Activated CD4-positive, alpha-beta memory T cell treated with anti-CD3 and anti-CD28 coated beads for 36 hours (primary cell): ENCODE measurements at regions of chr15 and their contacts with region 1.

Region 1: GRCh38 chr15:99704444-99704838 is 28.8 kb downstream of the LYSMD4 start:
- DNase-seq: no peak
- H3K4me3 Mint-ChIP-seq: no peak overlapping the region
- H3K27ac Mint-ChIP-seq: no peak overlapping the region
- H3K4me1 Mint-ChIP-seq: peaks cover 40% of the 10 kb centered on the region
- H3K27me3 Mint-ChIP-seq: no peaks in the 10 kb centered on the region

Region 2: DNA sequence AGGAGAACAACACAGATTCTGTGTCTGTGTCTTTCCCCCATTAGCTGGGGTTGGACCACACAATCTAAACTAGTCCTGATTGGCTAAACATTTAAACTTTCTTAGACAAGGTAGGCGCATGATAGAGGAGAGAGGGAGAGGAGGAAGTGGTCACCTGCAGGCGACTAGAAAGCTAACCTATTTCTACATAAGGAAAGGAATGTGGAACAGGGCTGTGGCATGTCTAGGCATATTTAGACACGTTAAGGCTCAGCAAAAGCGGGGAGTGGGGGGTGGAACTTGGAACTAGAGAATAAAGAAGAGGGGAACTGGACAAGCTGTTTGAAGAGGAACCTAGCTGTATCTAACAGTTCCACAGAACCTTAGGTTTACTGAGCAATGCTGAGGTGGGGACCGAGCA is 440.3 kb before region 1 on chr15:
- CTCF ChIA-PET with region 1: interaction called, 25 read pairs
- POLR2A ChIA-PET with region 1: no interaction called
- intact Hi-C with region 1: no loop called
- DNase-seq: no peak
- H3K4me3 Mint-ChIP-seq: no peak overlapping the region
- H3K27ac Mint-ChIP-seq: no peak overlapping the region
- H3K4me1 Mint-ChIP-seq: no peaks in the 10 kb centered on the region
- H3K27me3 Mint-ChIP-seq: no peaks in the 10 kb centered on the region

Region 3: DNA sequence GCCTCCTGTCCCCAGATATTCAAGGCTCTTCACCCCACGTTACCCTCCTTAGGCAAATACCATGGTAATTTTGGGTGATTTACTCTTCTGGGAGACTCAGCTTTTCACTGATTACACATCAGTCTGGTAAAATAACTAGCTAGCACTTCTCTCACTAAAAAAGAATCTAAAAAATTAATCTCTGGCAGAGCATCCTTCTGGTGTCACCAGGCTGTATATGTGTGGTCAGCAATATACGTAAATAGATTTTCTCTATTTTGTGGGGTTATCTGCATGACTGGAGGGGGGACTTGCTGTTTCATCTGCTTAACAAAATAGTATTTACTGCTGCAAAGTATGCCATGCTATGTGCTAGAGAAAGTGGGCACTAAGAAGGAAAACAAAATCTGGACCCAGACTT is 408.1 kb before region 1 on chr15:
- CTCF ChIA-PET with region 1: interaction called, 10 read pairs
- POLR2A ChIA-PET with region 1: no interaction called
- intact Hi-C with region 1: no loop called
- DNase-seq: no peak
- H3K4me3 Mint-ChIP-seq: no peak overlapping the region
- H3K27ac Mint-ChIP-seq: no peak overlapping the region
- H3K4me1 Mint-ChIP-seq: no peaks in the 10 kb centered on the region
- H3K27me3 Mint-ChIP-seq: no peaks in the 10 kb centered on the region

Region 4: DNA sequence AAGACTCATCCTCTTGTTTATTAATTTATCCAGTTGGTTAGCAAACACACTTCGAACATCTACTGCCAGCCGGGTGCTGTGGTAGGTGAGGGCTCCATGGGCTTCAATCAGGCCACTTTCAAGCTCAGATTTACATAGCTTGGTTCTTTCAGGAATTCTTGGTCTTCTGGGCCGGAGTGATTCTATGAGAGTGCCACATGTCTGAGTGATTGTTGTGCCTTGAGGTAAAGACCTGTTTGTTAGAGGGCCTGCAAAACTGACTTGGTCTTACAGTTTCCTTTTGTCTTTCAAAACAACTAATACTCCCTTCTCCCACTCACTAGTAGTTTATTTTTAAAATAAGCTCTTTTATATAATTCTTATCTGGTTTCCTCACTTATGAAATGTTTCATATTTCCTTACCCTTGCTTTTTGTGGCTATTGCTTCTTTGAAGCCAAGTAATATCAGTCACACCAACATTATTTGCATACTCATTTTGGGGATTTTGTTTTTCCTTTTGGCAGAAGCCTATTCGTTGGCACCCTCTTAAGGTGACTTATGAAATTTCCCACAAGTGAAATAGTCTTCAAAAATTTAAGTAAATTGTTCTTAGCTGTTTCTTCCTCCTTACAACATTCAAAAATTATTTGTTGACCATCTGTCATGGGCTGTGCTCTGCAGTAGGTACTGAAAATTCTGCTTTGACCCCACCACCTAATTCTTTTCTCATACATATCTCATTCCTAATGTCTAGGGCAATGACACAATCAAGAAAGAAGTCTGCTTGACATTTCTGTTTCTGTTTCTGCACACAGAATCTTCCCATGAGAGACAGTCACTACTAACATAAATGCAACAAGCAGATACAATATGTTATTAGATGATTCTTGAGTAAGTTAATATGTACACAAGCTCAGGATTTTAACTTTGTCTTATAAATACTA is 333.0 kb before region 1 on chr15:
- CTCF ChIA-PET with region 1: interaction called, 22 read pairs
- POLR2A ChIA-PET with region 1: no interaction called
- intact Hi-C with region 1: loop called (anchors 2 kb)
- DNase-seq: no peak
- H3K4me3 Mint-ChIP-seq: no peak overlapping the region
- H3K27ac Mint-ChIP-seq: peak overlapping the region; percentile 55
- H3K4me1 Mint-ChIP-seq: peaks cover 12% of the 10 kb centered on the region
- H3K27me3 Mint-ChIP-seq: no peaks in the 10 kb centered on the region

Region 5: DNA sequence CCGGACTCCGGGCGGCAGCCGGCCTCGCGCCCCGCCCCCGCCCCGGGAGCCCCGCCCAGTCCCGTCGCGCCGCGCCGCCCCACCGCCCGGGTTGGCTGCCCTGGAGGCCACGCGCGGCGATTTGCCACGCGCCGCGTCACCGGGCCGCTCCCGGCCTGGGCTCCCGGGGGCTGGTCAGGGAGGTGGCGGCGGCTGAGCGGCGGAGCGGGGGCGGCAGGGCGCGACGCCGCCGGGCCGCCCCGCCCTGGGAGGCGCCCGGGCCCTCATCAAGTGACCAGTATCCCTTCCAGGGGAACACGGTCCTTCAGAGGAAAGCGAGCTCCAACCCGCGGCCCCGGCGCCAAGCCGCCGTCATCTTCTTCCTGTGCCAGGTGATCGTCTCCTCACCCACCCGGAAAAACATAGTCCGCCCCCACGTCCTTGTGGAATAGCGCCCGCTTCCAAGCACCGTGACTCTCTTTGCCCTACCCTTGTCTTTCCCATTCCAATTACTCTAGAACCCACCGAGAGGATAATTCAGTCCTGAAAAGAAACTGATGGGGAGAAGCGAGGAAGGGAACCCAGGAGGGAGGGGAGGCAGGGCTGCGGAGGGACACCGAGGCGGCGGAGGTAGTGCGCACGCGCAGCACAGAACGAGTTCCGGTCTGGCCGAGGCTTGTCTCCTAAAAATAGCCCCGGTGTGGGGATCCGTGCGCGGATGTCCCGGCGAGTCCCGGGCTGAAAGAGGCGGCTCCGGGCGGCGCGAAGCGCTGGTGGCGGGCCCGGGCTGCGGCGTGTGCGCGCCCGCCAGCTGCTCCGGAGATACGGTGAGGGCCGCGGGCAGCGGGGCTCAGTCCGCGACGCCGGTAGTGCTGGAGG is 138.9 kb before region 1 on chr15 and contains the start of gene MEF2A:
- CTCF ChIA-PET with region 1: interaction called, 33 read pairs
- POLR2A ChIA-PET with region 1: interaction called, 4 read pairs
- intact Hi-C with region 1: loop called (anchors 1 kb)
- DNase-seq: peak; percentile 94
- H3K4me3 Mint-ChIP-seq: peak within 1 kb of the TSS; percentile 96
- H3K27ac Mint-ChIP-seq: peak within 1 kb of the TSS; percentile 97
- H3K4me1 Mint-ChIP-seq: peaks cover 16% of the 10 kb centered on the region
- H3K27me3 Mint-ChIP-seq: no peaks in the 10 kb centered on the region
- total RNA-seq, gene MEF2A: 15.9 to 19.5 TPM

Region 6: GRCh38 chr15:99733268-99734039 is 29.0 kb after region 1 on chr15 and contains the start of gene LYSMD4:
- CTCF ChIA-PET with region 1: interaction called, 20 read pairs
- POLR2A ChIA-PET with region 1: no interaction called
- intact Hi-C with region 1: loop called (anchors 1 kb)
- DNase-seq: peak; percentile 99
- H3K4me3 Mint-ChIP-seq: peak within 1 kb of the TSS; percentile 75
- H3K27ac Mint-ChIP-seq: peak within 1 kb of the TSS; percentile 92
- H3K4me1 Mint-ChIP-seq: peaks cover 11% of the 10 kb centered on the region
- H3K27me3 Mint-ChIP-seq: no peaks in the 10 kb centered on the region
- total RNA-seq, gene LYSMD4: 5.2 to 7.6 TPM

Region 7: DNA sequence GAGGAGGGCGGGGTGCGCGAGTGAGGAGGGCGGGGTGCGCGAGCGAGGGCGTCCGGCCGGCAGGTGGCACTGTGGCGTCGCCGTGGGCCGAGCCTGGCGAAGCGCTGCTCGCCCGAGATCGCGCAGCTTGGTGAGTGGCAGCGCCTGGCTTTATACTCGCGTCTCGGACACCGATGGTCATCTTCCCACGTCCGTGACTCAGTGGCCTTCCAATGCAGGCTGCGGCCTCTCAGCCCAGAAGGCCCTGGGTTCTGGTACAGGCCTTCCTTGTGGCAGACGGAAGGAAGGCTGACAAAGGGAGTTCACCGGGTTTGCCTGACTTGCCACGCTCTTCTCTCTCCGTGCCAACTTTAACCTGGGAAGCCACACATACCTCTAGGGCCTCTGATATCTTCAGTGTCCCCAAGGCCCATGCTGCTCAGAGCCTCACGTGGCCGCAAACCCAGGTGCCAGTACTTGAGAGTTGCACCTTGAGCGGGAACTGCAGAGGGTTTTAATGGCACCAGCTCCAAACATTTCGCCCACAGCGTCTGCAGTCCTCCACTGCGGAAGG is 224.1 kb after region 1 on chr15:
- CTCF ChIA-PET with region 1: no interaction called
- POLR2A ChIA-PET with region 1: no interaction called
- intact Hi-C with region 1: no loop called
- DNase-seq: peak; percentile 87
- H3K4me3 Mint-ChIP-seq: peak overlapping the region; percentile 77
- H3K27ac Mint-ChIP-seq: peak overlapping the region; percentile 42
- H3K4me1 Mint-ChIP-seq: peaks cover 8% of the 10 kb centered on the region
- H3K27me3 Mint-ChIP-seq: no peaks in the 10 kb centered on the region